HCT116 (cell line): ENCODE measurements at regions of chr17 and their contacts with region 1.

Region 1: GRCh38 chr17:44110823-44111633 is 12.4 kb downstream of the HDAC5 start:
- DNase-seq: no peak
- ATAC-seq: peak; percentile 86
- H3K4me3 ChIP-seq: peak overlapping the region; percentile 17 to 43
- H3K27ac ChIP-seq: peak overlapping the region; percentile 66
- H3K4me1 ChIP-seq: peaks cover 46 to 66% of the 10 kb centered on the region in 2 experiments
- H3K27me3 ChIP-seq: no peaks in the 10 kb centered on the region
- CTCF ChIP-seq: no peak
- POLR2A ChIP-seq: no peak
- RAD21 ChIP-seq: no peak

Region 2: GRCh38 chr17:44084131-44084544 is 26.9 kb before region 1 on chr17:
- CTCF ChIA-PET with region 1: interaction called, 23 read pairs
- POLR2A ChIA-PET with region 1: interaction called, 5 read pairs
- RAD21 ChIA-PET with region 1: interaction called, 5 read pairs
- intact Hi-C with region 1: loop called (anchors 5 kb)
- DNase-seq: no peak
- ATAC-seq: peak; percentile 60
- H3K4me3 ChIP-seq: no peak overlapping the region
- H3K27ac ChIP-seq: no peak overlapping the region; the same call in 1 of the 2 replicates
- H3K4me1 ChIP-seq: peaks cover 34 to 62% of the 10 kb centered on the region in 2 experiments
- H3K27me3 ChIP-seq: no peaks in the 10 kb centered on the region
- CTCF ChIP-seq: peak in 2 of 3 experiments; percentile 58 to 62; a peak in 5 of 6 replicates
- POLR2A ChIP-seq: no peak
- RAD21 ChIP-seq: peak; percentile 26

Region 3: DNA sequence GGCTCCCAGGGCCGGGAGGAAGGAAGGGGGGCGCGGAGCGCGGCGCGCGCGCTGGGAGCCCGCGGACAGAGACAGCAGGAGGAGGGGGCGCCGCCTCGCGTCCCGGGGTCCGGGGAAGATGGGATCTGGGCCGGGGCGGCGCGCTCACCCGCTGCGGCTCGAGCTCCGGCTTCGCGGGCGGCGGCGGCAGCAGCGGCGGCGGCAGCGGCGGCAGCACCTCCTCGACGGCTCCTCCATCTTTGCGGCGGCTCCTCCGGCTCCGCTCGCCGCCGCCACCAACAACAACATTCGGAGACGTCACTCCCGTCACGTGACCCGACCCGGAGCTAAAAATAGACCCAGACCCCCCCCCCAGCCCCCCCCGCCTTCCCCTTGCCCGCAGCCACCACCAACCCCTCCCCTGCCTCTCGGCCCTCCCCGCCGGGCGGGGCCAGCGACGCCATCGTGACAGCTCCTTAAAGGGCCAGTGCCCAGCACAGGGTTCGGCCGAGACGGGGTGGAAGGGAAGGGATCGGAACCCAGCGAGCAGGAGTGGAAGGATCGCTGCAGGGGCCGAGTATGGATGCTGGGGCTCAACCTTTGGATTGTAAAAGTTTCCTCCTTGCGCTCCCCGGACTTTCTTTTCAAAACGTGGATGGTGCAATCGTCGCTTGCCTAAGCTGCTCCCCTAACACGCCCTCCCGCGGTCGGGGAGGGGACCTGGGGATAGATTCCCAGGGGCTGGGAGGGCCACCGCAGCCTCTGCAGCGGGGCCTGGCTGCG is 12.5 kb after region 1 on chr17 and contains the start of gene HDAC5:
- CTCF ChIA-PET with region 1: interaction called, 13 read pairs
- POLR2A ChIA-PET with region 1: interaction called, 6 read pairs
- RAD21 ChIA-PET with region 1: interaction called in 1 of 2 experiments, 3 read pairs
- intact Hi-C with region 1: no loop called
- DNase-seq: peak; percentile 90
- ATAC-seq: peak; percentile 94
- H3K4me3 ChIP-seq: peak within 1 kb of the TSS; percentile 65 to 85
- H3K27ac ChIP-seq: peak within 1 kb of the TSS; percentile 77
- H3K4me1 ChIP-seq: peaks cover 14 to 36% of the 10 kb centered on the region in 2 experiments
- H3K27me3 ChIP-seq: no peaks in the 10 kb centered on the region
- CTCF ChIP-seq: peak; percentile 53 to 59 (median 53); a peak in 5 of 6 replicates
- POLR2A ChIP-seq: no peak
- RAD21 ChIP-seq: peak; percentile 52
- total RNA-seq, gene HDAC5: 32.9 TPM

Region 4: DNA sequence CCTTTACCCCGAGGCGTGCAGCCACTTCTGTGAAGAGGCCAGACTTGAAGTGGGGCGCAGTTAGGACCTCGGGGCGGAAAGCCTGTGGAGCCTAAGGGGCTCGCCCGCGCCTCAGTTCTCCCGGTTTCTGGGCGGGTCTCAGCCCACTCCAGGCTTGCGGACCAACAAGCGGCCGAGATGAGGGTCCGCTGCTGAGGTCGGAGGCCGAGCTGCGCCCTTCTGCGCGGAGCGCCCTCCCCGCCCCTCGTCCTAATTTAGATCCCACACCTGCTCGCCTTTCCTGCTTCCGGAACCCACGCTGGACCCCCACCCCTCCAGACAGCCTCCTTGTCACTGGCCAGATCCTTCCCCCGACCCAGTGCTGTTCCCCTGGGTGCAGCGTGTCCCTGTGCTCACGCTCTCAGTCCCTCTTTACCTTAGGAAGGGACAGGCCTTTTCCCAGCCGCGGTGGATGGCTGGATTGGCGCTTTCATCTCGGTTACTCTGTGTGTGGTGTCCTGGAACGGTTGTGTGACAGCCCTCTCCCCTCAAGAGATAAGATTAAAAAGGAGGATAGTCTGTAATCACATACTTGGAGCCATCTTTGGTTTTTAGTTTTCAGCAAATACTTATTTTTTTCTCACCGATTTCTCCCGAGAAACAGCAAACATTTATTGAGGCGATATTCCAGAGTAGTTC is 89.6 kb after region 1 on chr17:
- CTCF ChIA-PET with region 1: no interaction called
- POLR2A ChIA-PET with region 1: no interaction called
- RAD21 ChIA-PET with region 1: no interaction called
- intact Hi-C with region 1: no loop called
- DNase-seq: no peak
- ATAC-seq: peak; percentile 10
- H3K4me3 ChIP-seq: peak overlapping the region; percentile 81 to 83
- H3K27ac ChIP-seq: peak overlapping the region; percentile 94
- H3K4me1 ChIP-seq: peaks cover 43 to 51% of the 10 kb centered on the region in 2 experiments
- H3K27me3 ChIP-seq: no peaks in the 10 kb centered on the region
- CTCF ChIP-seq: no peak
- POLR2A ChIP-seq: no peak
- RAD21 ChIP-seq: no peak